ENCODE measurements at regions of chr6 and their contacts with region 1.

Region 1: DNA sequence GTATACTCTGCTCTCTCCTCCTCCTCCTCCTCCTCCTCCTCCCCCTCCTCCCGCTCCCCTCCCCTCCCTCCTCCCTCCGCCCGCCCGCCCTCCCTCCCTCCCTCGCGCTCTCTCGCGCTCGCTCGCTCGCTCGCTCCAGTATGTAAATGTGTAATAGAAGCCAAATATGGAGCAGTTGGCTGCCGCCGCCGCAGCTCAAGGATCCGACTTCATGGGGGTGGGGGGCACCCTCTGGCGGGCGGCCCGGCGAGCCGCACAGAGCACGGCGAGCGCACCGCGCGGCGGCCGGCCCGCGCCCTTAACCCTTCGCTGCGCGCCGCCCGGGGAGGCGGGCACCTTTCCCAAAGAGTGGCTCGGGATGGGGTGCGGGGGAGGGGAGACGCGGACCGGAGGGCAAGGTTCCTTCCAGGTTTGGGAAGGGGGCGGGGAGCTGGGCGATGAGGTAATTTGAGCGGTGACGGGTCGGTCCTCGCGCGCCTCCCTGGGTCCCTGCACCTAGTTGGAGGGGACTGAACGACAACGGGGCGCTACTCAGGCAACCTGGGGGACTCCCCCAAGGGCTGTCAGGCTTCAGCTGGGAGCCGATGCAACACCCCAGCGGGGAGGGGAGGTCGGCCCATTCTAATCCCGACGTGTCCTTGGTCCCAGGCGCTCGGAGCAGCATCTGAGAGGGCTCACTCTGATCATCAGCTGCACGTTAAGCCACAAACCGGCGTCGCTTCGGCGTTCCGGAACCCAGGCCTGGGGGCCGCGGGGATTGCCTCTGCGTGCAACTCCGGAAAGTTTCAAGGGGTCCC is 409 bp upstream of the ATXN1 start:
- DNase-seq: peak; percentile 91
- ATAC-seq: peak; percentile 46
- H3K4me3 ChIP-seq: peak overlapping the region; percentile 91
- H3K27ac ChIP-seq: peak overlapping the region; percentile 98
- H3K4me1 ChIP-seq: peaks cover 5% of the 10 kb centered on the region
- H3K27me3 ChIP-seq: no peaks in the 10 kb centered on the region
- CTCF ChIP-seq: peak; percentile 56
- POLR2A ChIP-seq: peak; percentile 83
- RAD21 ChIP-seq: peak; percentile 59

Region 2: GRCh38 chr6:16403831-16404230 is 357.8 kb before region 1 on chr6:
- CTCF ChIA-PET with region 1: no interaction called
- POLR2A ChIA-PET with region 1: no interaction called
- dilution Hi-C with region 1: no loop called
- in situ Hi-C with region 1: loop called (anchors 10 kb)
- intact Hi-C with region 1: loop called (anchors 5 kb)
- DNase-seq: peak; percentile 27
- ATAC-seq: peak; percentile 40
- H3K4me3 ChIP-seq: no peak overlapping the region
- H3K27ac ChIP-seq: peak overlapping the region; percentile 48; the same call in 1 of the 2 replicates
- H3K4me1 ChIP-seq: peaks cover 40% of the 10 kb centered on the region
- H3K27me3 ChIP-seq: no peaks in the 10 kb centered on the region
- CTCF ChIP-seq: peak; percentile 53
- POLR2A ChIP-seq: no peak
- RAD21 ChIP-seq: peak; percentile 53

Region 3: GRCh38 chr6:16514249-16514648 is 247.4 kb before region 1 on chr6:
- CTCF ChIA-PET with region 1: interaction called, 14 read pairs
- POLR2A ChIA-PET with region 1: interaction called, 3 read pairs
- dilution Hi-C with region 1: no loop called
- in situ Hi-C with region 1: loop called (anchors 5 kb)
- intact Hi-C with region 1: loop called (anchors 2 kb)
- DNase-seq: peak; percentile 76
- ATAC-seq: peak; percentile 76
- H3K4me3 ChIP-seq: no peak overlapping the region
- H3K27ac ChIP-seq: no peak overlapping the region
- H3K4me1 ChIP-seq: peaks cover 5% of the 10 kb centered on the region; the same call in 1 of the 2 replicates
- H3K27me3 ChIP-seq: no peaks in the 10 kb centered on the region
- CTCF ChIP-seq: peak; percentile 66
- POLR2A ChIP-seq: no peak
- RAD21 ChIP-seq: peak; percentile 77

Region 4: DNA sequence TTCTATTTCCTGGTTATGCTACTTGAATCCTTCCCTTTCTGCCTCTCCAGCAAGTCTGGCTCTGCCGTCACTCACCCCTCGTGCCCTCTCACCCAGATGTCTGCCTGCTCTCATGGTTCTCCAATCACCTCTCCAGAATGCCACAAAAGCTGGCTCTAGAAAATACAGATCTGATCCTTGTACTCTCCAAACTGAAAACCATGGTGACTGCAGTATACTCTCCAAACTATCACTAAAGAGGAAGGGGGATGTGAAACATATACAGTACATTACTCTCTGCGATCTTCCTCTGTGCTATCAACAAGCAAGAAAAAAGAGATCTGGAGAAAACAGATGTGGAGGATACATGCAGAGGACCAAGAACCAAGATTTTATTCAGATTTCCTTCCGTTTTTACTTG is 91.5 kb before region 1 on chr6:
- CTCF ChIA-PET with region 1: no interaction called
- POLR2A ChIA-PET with region 1: no interaction called
- dilution Hi-C with region 1: no loop called
- in situ Hi-C with region 1: no loop called
- intact Hi-C with region 1: loop called (anchors 5 kb)
- DNase-seq: no peak
- ATAC-seq: no peak
- H3K4me3 ChIP-seq: no peak overlapping the region
- H3K27ac ChIP-seq: no peak overlapping the region
- H3K4me1 ChIP-seq: peaks cover 13% of the 10 kb centered on the region
- H3K27me3 ChIP-seq: no peaks in the 10 kb centered on the region
- CTCF ChIP-seq: no peak
- POLR2A ChIP-seq: no peak
- RAD21 ChIP-seq: no peak

Region 5: GRCh38 chr6:16898640-16899401 is 137.2 kb after region 1 on chr6:
- CTCF ChIA-PET with region 1: no interaction called
- POLR2A ChIA-PET with region 1: no interaction called
- dilution Hi-C with region 1: no loop called
- in situ Hi-C with region 1: no loop called
- intact Hi-C with region 1: no loop called
- DNase-seq: no peak
- ATAC-seq: no peak
- H3K4me3 ChIP-seq: no peak overlapping the region
- H3K27ac ChIP-seq: no peak overlapping the region
- H3K4me1 ChIP-seq: 0 out of 2 replicates have a peak, but pooled peaks cover 6% of the 10 kb centered on the region
- H3K27me3 ChIP-seq: no peaks in the 10 kb centered on the region
- CTCF ChIP-seq: no peak
- POLR2A ChIP-seq: no peak
- RAD21 ChIP-seq: no peak

Region 6: GRCh38 chr6:16964553-16965501 is 203.2 kb after region 1 on chr6:
- CTCF ChIA-PET with region 1: interaction called, 21 read pairs
- POLR2A ChIA-PET with region 1: no interaction called
- dilution Hi-C with region 1: no loop called
- in situ Hi-C with region 1: no loop called
- intact Hi-C with region 1: loop called (anchors 1 kb)
- DNase-seq: peak; percentile 70
- ATAC-seq: peak; percentile 94
- H3K4me3 ChIP-seq: no peak overlapping the region
- H3K27ac ChIP-seq: no peak overlapping the region
- H3K4me1 ChIP-seq: peaks cover 16% of the 10 kb centered on the region
- H3K27me3 ChIP-seq: no peaks in the 10 kb centered on the region
- CTCF ChIP-seq: peak; percentile 90
- POLR2A ChIP-seq: no peak
- RAD21 ChIP-seq: peak; percentile 94

Region 7: DNA sequence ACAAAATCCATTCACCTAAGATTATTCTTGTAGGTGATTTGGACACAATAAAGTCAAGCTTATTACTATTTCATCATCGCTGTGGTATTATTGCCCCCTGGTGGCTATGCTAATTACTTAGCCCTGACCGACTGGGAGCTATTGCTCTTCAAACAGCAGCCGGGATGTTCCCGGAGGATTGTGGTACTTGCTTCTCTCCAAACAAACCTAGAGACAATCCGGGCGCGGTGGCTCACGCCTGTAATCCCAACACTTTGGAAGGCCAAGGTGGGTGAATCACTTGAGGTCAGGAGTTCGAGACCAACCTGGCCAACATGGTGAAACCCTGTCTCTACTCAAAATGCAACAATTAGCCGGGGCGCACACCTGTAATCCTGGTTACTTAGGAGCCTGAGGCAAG is 324.8 kb after region 1 on chr6:
- CTCF ChIA-PET with region 1: interaction called, 13 read pairs
- POLR2A ChIA-PET with region 1: no interaction called
- dilution Hi-C with region 1: no loop called
- in situ Hi-C with region 1: loop called (anchors 5 kb)
- intact Hi-C with region 1: loop called (anchors 1 kb)
- DNase-seq: peak; percentile 83
- ATAC-seq: peak; percentile 86
- H3K4me3 ChIP-seq: no peak overlapping the region
- H3K27ac ChIP-seq: no peak overlapping the region
- H3K4me1 ChIP-seq: 0 out of 2 replicates have a peak, but pooled peaks cover 1% of the 10 kb centered on the region
- H3K27me3 ChIP-seq: no peaks in the 10 kb centered on the region; the same call in 1 of the 2 replicates
- CTCF ChIP-seq: peak; percentile 82
- POLR2A ChIP-seq: no peak
- RAD21 ChIP-seq: peak; percentile 90